Left cardiac atrium (tissue), 4 donors: ENCODE measurements at regions of chr1 and their contacts with region 1.

Region 1: GRCh38 chr1:15409388-15410222 is at the start of gene EFHD2:
- DNase-seq: peak; percentile 90
- ATAC-seq: peak; percentile 89 to 95
- total RNA-seq, gene EFHD2: 19.1 to 24.0 TPM

Region 2: GRCh38 chr1:15283526-15283925 is 126.1 kb before region 1 on chr1:
- intact Hi-C with region 1: no loop called
- DNase-seq: no peak
- ATAC-seq: peak; percentile 79 to 95

Region 3: DNA sequence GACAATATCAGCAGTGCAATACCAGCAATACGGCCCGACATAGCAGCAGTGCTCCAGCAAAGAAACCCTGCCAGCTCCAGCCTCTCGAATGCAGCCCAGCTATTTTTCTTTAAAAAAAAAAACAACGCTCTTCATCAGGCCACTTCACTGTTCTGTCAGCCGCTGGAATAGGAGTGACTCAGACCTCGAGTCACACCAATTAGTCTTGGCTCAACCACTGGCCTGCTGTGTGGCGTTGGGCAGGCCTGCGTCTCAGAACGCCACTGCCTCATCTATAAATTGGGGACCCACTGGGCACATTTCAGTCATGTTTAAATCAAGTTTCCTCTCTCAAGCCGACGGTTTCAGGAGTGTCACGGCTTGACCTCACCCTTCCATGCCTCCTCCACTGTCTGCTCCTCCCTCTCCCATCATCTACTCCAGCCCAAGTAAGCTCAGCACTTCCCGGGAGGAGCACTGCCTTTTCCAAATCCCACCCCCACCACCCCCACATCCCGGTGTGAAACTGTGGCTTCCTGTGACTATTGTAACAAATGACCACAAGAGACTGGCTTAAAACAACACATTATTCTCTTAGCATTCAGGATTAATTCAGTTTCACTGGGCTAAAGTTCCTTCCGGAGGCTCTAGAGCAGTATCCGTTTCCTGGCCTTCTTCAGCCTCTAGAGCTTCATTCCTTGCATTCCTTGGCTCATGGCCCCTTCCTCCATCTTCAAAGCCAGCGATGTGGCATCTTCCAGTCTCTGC is 71.8 kb before region 1 on chr1:
- intact Hi-C with region 1: loop called in 1 of 2 experiments (anchors 5 kb)
- DNase-seq: peak; percentile 51
- ATAC-seq: peak; percentile 80 to 81